Mammary epithelial cell (primary cell): ENCODE measurements at regions of chr6 and their contacts with region 1.

Region 1: DNA sequence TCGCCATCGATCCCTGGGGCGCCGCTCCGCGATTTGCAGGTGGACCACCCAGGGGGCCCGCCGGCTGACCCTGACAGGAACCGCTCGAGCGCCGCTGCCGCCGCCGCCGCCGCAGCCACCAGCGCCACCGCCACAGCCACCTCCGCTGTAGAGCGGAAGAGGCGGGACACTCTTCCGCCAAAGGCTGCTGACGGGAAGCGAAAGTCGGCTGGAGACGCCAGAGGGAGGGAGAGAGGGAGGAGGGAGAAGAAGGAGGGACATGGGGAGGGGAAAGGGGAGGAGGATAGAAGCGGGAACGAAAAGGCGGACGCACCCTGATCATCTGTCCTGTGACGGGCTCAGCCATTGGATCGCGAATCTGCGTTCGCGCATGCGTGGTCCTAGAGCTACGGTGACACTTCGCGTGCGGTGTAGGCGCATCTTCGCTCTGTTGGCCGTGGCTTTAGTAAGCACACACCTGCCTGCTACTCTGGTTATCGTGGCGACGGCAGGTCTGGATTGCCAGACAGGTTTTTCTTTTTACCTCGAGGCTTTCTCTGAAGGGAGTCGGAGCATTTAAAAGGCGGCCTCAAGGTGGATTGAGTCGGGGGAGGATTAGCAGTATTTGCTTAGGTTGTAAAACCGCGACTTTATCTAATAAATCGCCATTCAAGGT is at the start of gene TMEM30A:
- DNase-seq: peak; percentile 99
- H3K4me3 ChIP-seq: peak within 1 kb of the TSS; percentile 73 to 96 (median 93)
- H3K27ac ChIP-seq: peak within 1 kb of the TSS; percentile 76
- H3K4me1 ChIP-seq: peaks cover 10% of the 10 kb centered on the region
- H3K27me3 ChIP-seq: no peaks in the 10 kb centered on the region
- CTCF ChIP-seq: no peak
- total RNA-seq, gene TMEM30A: 73.1 to 127 TPM

Region 2: DNA sequence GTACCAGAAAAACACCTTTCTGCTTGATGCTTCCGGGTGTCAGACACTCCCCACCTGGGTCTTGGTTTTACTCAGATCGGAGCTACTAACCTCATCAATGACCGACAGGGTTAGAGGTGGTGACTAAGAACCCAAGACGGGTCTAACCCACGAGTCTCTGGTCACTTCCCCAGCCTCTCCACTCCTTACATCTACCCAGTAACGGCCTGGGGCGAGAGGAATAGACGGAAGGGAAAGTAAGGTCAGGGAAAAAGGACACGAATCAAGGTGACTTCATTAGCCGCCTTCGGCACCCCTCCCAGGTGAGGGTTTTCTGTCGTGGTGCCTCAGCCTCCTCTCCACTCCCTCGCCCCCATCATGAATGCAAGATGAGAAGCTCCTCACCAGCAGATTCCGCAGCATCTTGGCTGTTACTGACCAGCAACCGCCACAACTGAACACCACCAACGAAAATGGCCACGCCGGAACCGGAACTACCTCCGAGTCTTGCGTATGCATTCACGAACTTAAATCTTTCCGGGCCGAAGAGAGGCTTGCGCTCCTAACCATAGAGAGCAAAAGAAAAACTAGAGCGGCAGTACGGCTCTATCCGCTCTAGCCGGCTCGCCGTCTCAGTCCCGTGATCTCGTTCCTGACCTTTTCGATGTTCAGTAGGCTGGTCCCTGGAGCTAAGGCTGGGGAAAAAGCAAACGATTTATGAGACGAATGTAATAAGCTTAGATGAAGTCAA is 41.3 kb before region 1 on chr6 and contains the start of gene COX7A2:
- CTCF ChIA-PET with region 1: no interaction called
- dilution Hi-C with region 1: no loop called
- in situ Hi-C with region 1: no loop called
- intact Hi-C with region 1: loop called (anchors 1 kb)
- DNase-seq: peak; percentile 96
- H3K4me3 ChIP-seq: peak within 1 kb of the TSS; percentile 77 to 98 (median 95)
- H3K27ac ChIP-seq: peak within 1 kb of the TSS; percentile 84
- H3K4me1 ChIP-seq: peaks cover 6% of the 10 kb centered on the region
- H3K27me3 ChIP-seq: no peaks in the 10 kb centered on the region
- CTCF ChIP-seq: no peak
- total RNA-seq, gene COX7A2: 73.3 to 370 TPM

Region 3: DNA sequence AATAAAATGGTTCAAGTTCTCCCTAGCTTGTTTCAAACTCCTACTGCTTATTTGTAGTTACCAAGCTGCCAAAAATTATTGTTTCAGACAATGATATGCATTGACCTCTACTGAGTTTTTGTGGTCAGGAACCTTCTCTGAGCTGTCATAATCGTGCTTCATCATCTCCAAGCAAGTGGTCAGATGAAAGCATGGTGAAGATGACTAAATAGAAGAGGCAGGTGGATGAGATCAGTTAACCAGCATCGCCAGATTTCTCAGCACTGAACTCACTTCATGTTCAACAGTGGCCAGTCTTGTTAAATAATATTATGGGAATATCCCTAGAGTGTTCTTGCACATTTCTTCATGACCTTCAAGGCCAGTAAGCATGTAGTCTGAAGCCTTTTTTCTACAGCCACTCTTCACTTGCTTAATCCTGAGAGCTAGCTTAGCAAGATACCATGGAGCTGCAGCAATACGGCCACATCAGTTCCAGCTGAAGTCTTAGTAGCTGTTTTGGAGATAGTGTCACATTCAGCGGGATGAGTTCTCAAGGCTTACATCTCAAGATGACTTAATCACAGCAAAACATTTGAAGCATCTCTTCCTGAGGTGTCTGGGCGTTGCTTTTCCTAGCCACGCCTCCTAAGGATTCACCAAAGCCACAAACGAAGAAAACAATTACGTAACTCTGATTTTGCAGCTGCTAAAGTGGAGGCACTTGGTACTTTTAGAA is 101.5 kb after region 1 on chr6:
- CTCF ChIA-PET with region 1: no interaction called
- dilution Hi-C with region 1: no loop called
- in situ Hi-C with region 1: no loop called
- intact Hi-C with region 1: no loop called
- DNase-seq: peak; percentile 56
- H3K4me3 ChIP-seq: no peak overlapping the region
- H3K27ac ChIP-seq: no peak overlapping the region
- H3K4me1 ChIP-seq: no peaks in the 10 kb centered on the region
- H3K27me3 ChIP-seq: no peaks in the 10 kb centered on the region
- CTCF ChIP-seq: no peak

Region 4: GRCh38 chr6:75601304-75602245 is 316.8 kb after region 1 on chr6 and contains the start of gene SENP6:
- CTCF ChIA-PET with region 1: no interaction called
- dilution Hi-C with region 1: no loop called
- in situ Hi-C with region 1: no loop called
- intact Hi-C with region 1: loop called (anchors 5 kb)
- DNase-seq: peak; percentile 83
- H3K4me3 ChIP-seq: peak within 1 kb of the TSS; percentile 94 to 97 (median 95)
- H3K27ac ChIP-seq: peak within 1 kb of the TSS; percentile 95
- H3K4me1 ChIP-seq: peaks cover 10% of the 10 kb centered on the region
- H3K27me3 ChIP-seq: no peaks in the 10 kb centered on the region
- CTCF ChIP-seq: no peak
- total RNA-seq, gene SENP6: 74.3 to 83.3 TPM